RWPE1 (cell line): ENCODE measurements at regions of chr4 and their contacts with region 1.

Region 1: GRCh38 chr4:118034053-118034785 is at the start of gene NDST3:
- DNase-seq: peak; percentile 51
- H3K27ac ChIP-seq: peak within 1 kb of the TSS; percentile 18
- CTCF ChIP-seq: peak; percentile 73

Region 2: DNA sequence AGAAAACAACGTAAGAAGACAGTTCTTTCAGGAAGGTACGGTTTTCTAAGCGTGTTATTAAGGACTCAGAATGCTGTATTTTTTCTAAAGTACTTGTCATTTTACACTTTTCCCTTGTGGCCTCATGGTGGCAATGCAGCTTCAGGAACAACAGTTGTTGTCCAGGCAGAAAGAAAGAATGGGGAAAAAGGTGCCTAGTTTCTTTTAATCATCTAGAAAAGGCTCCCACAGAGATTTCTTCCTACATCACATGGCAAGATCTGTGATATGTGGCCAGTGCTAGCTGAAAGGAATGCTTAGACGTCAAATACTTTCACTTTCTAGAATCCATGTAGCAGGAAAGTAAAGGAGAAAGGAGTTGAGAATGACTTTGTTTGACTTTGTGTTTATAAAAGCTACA is 899.8 kb before region 1 on chr4:
- CTCF ChIA-PET with region 1: interaction called, 14 read pairs
- POLR2A ChIA-PET with region 1: no interaction called
- DNase-seq: peak; percentile 15
- H3K27ac ChIP-seq: no peak overlapping the region
- CTCF ChIP-seq: peak; percentile 44; the same call in 1 of the 2 replicates

Region 3: GRCh38 chr4:117533501-117533900 is 500.7 kb before region 1 on chr4:
- CTCF ChIA-PET with region 1: no interaction called
- POLR2A ChIA-PET with region 1: no interaction called
- DNase-seq: no peak
- H3K27ac ChIP-seq: no peak overlapping the region
- CTCF ChIP-seq: no peak